ENCODE measurements at regions of chr3 and their contacts with region 1.

Region 1: DNA sequence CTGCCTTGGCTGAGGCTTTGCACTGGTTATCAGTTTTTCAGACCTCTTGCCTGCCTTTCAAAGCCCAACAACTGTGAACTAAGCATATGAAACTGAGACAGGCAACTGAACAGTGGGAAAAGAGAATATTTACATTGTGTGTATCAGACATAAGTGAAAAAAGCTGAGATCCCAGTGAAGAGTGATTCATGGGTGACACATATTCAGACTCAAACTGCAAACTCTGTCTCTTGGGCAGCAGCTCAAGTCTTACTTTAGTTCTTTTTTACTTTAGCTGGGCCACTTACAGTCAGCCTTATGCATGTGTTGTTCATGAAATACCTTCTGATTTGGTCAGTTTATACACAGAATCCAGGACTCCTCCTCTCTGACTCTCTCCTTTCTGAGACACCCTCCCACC is 19.2 kb downstream of the SUCLG2 start:
- DNase-seq: no peak
- ATAC-seq: no peak
- H3K4me3 ChIP-seq: no peak overlapping the region
- H3K27ac ChIP-seq: no peak overlapping the region
- H3K4me1 ChIP-seq: no peaks in the 10 kb centered on the region
- H3K27me3 ChIP-seq: no peaks in the 10 kb centered on the region
- CTCF ChIP-seq: no peak
- EP300 ChIP-seq: no peak
- POLR2A ChIP-seq: no peak
- RAD21 ChIP-seq: no peak

Region 2: GRCh38 chr3:67647390-67647878 is 12.2 kb after region 1 on chr3:
- CTCF ChIA-PET with region 1: no interaction called
- POLR2A ChIA-PET with region 1: interaction called, 3 read pairs
- in situ Hi-C with region 1: no loop called
- intact Hi-C with region 1: loop called (anchors 2 kb)
- DNase-seq: peak; percentile 98
- ATAC-seq: peak; percentile 89
- H3K4me3 ChIP-seq: peak overlapping the region in 1 of 3 experiments; percentile 18; a peak in 1 of 6 replicates
- H3K27ac ChIP-seq: peak overlapping the region; percentile 86
- H3K4me1 ChIP-seq: peaks cover 79% of the 10 kb centered on the region
- H3K27me3 ChIP-seq: no peaks in the 10 kb centered on the region
- CTCF ChIP-seq: no peak
- EP300 ChIP-seq: peak; percentile 87 to 97
- POLR2A ChIP-seq: no peak
- RAD21 ChIP-seq: peak; percentile 30; the same call in 1 of the 2 replicates

Measured in HepG2 (cell line).